Heart right ventricle (tissue), 16 donors: ENCODE measurements at regions of chr15 and their contacts with region 1.

Region 1: DNA sequence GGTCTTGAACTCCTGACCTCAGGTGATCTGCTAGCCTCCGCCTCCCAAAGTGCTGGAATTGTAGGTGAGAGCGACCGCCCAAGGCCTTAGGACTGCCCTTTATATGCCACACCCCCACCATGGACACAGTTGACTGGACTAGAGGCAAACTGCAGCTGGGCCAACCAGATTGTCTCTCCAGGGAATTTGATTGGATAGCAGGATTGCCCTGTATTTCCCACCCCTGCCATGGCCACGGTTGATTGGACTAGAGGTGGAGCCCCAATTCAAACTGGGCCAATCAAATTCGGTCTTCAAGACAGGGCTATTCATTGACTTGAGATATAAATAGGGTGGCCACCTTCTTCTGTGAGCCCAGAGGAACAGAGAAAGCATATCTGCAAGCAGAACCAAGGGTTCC is 6.9 kb upstream of the CLPX start:
- DNase-seq: no peak
- ATAC-seq: no peak
- H3K4me3 ChIP-seq: no peak overlapping the region
- H3K27ac ChIP-seq: no peak overlapping the region
- H3K4me1 ChIP-seq: peaks cover 0 to 5% (median 0%) of the 10 kb centered on the region in 9 donors
- H3K27me3 ChIP-seq: no peaks in the 10 kb centered on the region
- CTCF ChIP-seq: no peak

Region 2: GRCh38 chr15:64740311-64741170 is 451.5 kb before region 1 on chr15:
- intact Hi-C with region 1: no loop called
- DNase-seq: peak; percentile 67 to 73
- ATAC-seq: peak; percentile 58 to 95 (median 84)
- H3K4me3 ChIP-seq: peak overlapping the region in 3 of 10 donors; percentile 7 to 25 (median 14)
- H3K27ac ChIP-seq: peak overlapping the region in 9 of 10 donors; percentile 56 to 77 (median 61)
- H3K4me1 ChIP-seq: peaks cover 12 to 57% (median 38%) of the 10 kb centered on the region in 9 donors
- H3K27me3 ChIP-seq: no peaks in the 10 kb centered on the region
- CTCF ChIP-seq: peak in 7 of 9 donors; percentile 20 to 61 (median 46)

Region 3: GRCh38 chr15:65275728-65276126 is 83.7 kb after region 1 on chr15:
- intact Hi-C with region 1: loop called in 9 of 10 experiments (anchors 1 to 10 kb)
- DNase-seq: no peak
- ATAC-seq: peak in 3 of 8 donors; percentile 38 to 66 (median 51)
- H3K4me3 ChIP-seq: no peak overlapping the region
- H3K27ac ChIP-seq: no peak overlapping the region
- H3K4me1 ChIP-seq: peaks cover 0 to 37% (median 12%) of the 10 kb centered on the region in 9 donors
- H3K27me3 ChIP-seq: no peaks in the 10 kb centered on the region
- CTCF ChIP-seq: no peak

Region 4: GRCh38 chr15:65595960-65596359 is 403.9 kb after region 1 on chr15:
- intact Hi-C with region 1: no loop called
- DNase-seq: no peak
- ATAC-seq: no peak
- H3K4me3 ChIP-seq: no peak overlapping the region
- H3K27ac ChIP-seq: no peak overlapping the region
- H3K4me1 ChIP-seq: no peaks in the 10 kb centered on the region
- H3K27me3 ChIP-seq: no peaks in the 10 kb centered on the region
- CTCF ChIP-seq: peak in 5 of 9 donors; percentile 8 to 42 (median 24)